GM10248 (cell line): ENCODE measurements at regions of chr10 and their contacts with region 1.

Region 1: GRCh38 chr10:117216611-117217195 is 19.4 kb downstream of the KCNK18 start:
- DNase-seq: peak; percentile 90
- CTCF ChIP-seq: peak; percentile 100

Region 2: DNA sequence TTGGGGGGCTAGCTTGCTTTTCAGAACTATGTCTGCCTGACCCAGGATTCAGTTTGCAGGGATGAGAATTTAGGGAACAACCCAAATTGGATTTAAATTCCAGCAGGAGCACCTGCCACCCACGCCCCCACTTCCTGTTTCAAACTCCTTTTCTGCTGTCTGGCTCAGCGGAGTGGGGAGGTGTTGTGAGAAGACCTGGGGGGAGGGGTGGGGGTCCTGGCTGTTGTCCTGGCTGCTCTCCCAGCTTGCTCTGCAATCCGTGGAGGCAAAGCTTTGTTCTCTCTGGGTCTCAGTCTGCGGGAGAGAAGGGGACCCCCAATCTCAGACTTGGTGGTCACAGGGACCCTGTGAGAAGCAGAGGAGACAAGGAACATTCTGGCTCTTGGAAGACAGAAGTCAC is 18.6 kb before region 1 on chr10:
- CTCF ChIA-PET with region 1: interaction called, 33 read pairs
- POLR2A ChIA-PET with region 1: no interaction called
- DNase-seq: no peak
- CTCF ChIP-seq: no peak

Region 3: GRCh38 chr10:117226824-117227451 is 10.2 kb after region 1 on chr10:
- CTCF ChIA-PET with region 1: interaction called, 25 read pairs
- POLR2A ChIA-PET with region 1: no interaction called
- DNase-seq: peak; percentile 53
- CTCF ChIP-seq: peak; percentile 57

Region 4: GRCh38 chr10:117320050-117320665 is 103.5 kb after region 1 on chr10:
- CTCF ChIA-PET with region 1: interaction called, 143 read pairs
- POLR2A ChIA-PET with region 1: no interaction called
- DNase-seq: peak; percentile 14
- CTCF ChIP-seq: peak; percentile 73

Region 5: DNA sequence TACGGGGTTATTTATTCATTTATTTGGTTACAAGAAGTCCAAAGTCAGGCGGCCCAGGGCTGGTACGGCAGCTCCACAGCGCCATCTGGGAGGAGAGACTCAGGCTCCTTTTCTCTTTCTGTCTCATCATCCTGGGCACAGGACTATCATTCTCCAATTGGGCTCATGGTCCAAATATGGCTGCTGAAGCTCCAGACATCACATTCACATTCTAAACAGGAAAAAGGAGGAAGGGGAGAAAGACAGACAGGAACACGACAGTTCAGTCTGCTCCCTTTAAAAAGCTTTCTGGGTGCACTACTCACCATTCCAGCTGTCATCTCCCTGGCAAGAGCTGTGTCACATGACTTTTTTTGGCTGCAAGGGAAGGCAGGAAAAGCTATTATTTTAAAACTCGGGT is 232.9 kb after region 1 on chr10:
- CTCF ChIA-PET with region 1: interaction called, 19 read pairs
- POLR2A ChIA-PET with region 1: no interaction called
- DNase-seq: no peak
- CTCF ChIP-seq: peak; percentile 5

Region 6: GRCh38 chr10:118241229-118242137 is 1024.8 kb after region 1 on chr10:
- CTCF ChIA-PET with region 1: interaction called, 14 read pairs
- POLR2A ChIA-PET with region 1: no interaction called
- DNase-seq: peak; percentile 50
- CTCF ChIP-seq: peak; percentile 94